Right cardiac atrium (tissue), 5 donors: ENCODE measurements at regions of chr1 and their contacts with region 1.

Region 1: GRCh38 chr1:202848191-202848542 is 37.4 kb downstream of the PCAT6 start:
- DNase-seq: no peak
- ATAC-seq: no peak
- H3K4me3 ChIP-seq: no peak overlapping the region
- H3K27ac ChIP-seq: no peak overlapping the region
- H3K4me1 ChIP-seq: no peaks in the 10 kb centered on the region
- H3K27me3 ChIP-seq: no peaks in the 10 kb centered on the region

Region 2: GRCh38 chr1:202770135-202770534 is 78.0 kb before region 1 on chr1:
- intact Hi-C with region 1: no loop called
- DNase-seq: no peak
- ATAC-seq: no peak
- H3K4me3 ChIP-seq: no peak overlapping the region
- H3K27ac ChIP-seq: no peak overlapping the region
- H3K4me1 ChIP-seq: no peaks in the 10 kb centered on the region
- H3K27me3 ChIP-seq: no peaks in the 10 kb centered on the region

Region 3: GRCh38 chr1:202901555-202901954 is 53.4 kb after region 1 on chr1:
- intact Hi-C with region 1: no loop called
- DNase-seq: no peak
- ATAC-seq: no peak
- H3K4me3 ChIP-seq: no peak overlapping the region
- H3K27ac ChIP-seq: no peak overlapping the region
- H3K4me1 ChIP-seq: no peaks in the 10 kb centered on the region
- H3K27me3 ChIP-seq: no peaks in the 10 kb centered on the region

Region 4: GRCh38 chr1:202998836-202999750 is 150.9 kb after region 1 on chr1:
- intact Hi-C with region 1: no loop called
- DNase-seq: peak in 2 of 3 donors; percentile 21 to 47
- ATAC-seq: no peak
- H3K4me3 ChIP-seq: no peak overlapping the region
- H3K27ac ChIP-seq: no peak overlapping the region
- H3K4me1 ChIP-seq: no peaks in the 10 kb centered on the region
- H3K27me3 ChIP-seq: no peaks in the 10 kb centered on the region

Region 5: GRCh38 chr1:203101915-203102634 is 253.9 kb after region 1 on chr1:
- intact Hi-C with region 1: loop called in 1 of 4 experiments (anchors 10 kb)
- DNase-seq: no peak
- ATAC-seq: no peak
- H3K4me3 ChIP-seq: no peak overlapping the region
- H3K27ac ChIP-seq: no peak overlapping the region
- H3K4me1 ChIP-seq: no peaks in the 10 kb centered on the region
- H3K27me3 ChIP-seq: no peaks in the 10 kb centered on the region